HepG2 (cell line): ENCODE measurements at regions of chr1 and their contacts with region 1.

Region 1: GRCh38 chr1:85307987-85308832 is 31.8 kb upstream of the BCL10 start:
- DNase-seq: peak; percentile 70
- ATAC-seq: peak; percentile 97
- H3K4me3 ChIP-seq: peak overlapping the region in 2 of 3 experiments; percentile 29; a peak in 2 of 6 replicates
- H3K27ac ChIP-seq: no peak overlapping the region
- H3K4me1 ChIP-seq: peaks cover 15% of the 10 kb centered on the region
- H3K27me3 ChIP-seq: 0 out of 5 replicates have a peak, but pooled peaks cover 0 to 4% of the 10 kb centered on the region in 2 experiments
- CTCF ChIP-seq: peak; percentile 98
- EP300 ChIP-seq: no peak
- POLR2A ChIP-seq: no peak
- RAD21 ChIP-seq: peak; percentile 98

Region 2: GRCh38 chr1:85276215-85276977 is 31.8 kb before region 1 on chr1 and contains the start of gene BCL10:
- CTCF ChIA-PET with region 1: no interaction called
- POLR2A ChIA-PET with region 1: no interaction called
- in situ Hi-C with region 1: no loop called
- intact Hi-C with region 1: no loop called
- DNase-seq: peak; percentile 94
- ATAC-seq: peak; percentile 99
- H3K4me3 ChIP-seq: peak within 1 kb of the TSS; percentile 87 to 100 (median 89)
- H3K27ac ChIP-seq: peak within 1 kb of the TSS; percentile 83
- H3K4me1 ChIP-seq: peaks cover 61% of the 10 kb centered on the region
- H3K27me3 ChIP-seq: no peaks in the 10 kb centered on the region; a peak in 1 of 5 replicates
- CTCF ChIP-seq: no peak
- EP300 ChIP-seq: no peak
- POLR2A ChIP-seq: peak; percentile 78 to 87
- RAD21 ChIP-seq: no peak
- total RNA-seq, gene BCL10: 14.1 and 20.0 TPM in 2 replicates

Region 3: GRCh38 chr1:85344256-85344694 is 36.1 kb after region 1 on chr1:
- CTCF ChIA-PET with region 1: interaction called, 5 read pairs
- POLR2A ChIA-PET with region 1: no interaction called
- in situ Hi-C with region 1: no loop called
- intact Hi-C with region 1: loop called (anchors 1 kb)
- DNase-seq: peak; percentile 44
- ATAC-seq: peak; percentile 99
- H3K4me3 ChIP-seq: no peak overlapping the region
- H3K27ac ChIP-seq: no peak overlapping the region
- H3K4me1 ChIP-seq: peaks cover 32% of the 10 kb centered on the region
- H3K27me3 ChIP-seq: no peaks in the 10 kb centered on the region
- CTCF ChIP-seq: peak; percentile 80
- EP300 ChIP-seq: no peak
- POLR2A ChIP-seq: no peak
- RAD21 ChIP-seq: peak; percentile 53

Region 4: DNA sequence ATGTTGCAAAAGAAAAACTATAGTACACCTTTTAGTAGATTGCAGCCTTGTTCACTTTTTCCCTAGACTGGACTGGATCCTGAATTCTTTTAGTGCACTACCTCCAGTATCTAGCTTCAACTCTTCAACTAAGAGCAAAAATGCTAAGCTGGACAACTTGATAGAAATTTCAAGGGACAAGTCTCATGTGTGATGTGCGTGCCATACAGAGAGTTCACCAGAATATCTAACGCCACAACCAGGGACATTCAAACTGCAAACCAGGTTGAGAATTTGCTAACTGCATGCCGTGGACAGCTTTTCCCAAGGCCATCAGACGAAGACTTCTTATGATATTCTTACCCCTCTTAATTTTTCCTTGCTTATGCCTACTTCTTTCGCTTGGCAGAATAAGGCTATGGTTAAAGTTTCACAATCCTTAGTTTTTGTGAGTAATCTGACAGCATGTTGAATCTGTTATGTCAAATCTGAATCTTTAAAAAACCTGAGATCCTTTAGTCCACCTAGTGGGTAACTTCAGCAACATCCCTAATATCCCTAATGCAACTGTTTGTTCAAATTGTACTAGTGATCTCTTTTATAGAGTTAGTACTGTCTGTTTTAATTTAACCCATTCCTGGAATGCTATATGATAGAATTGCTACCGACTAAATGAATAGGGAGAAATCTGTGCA is 90.3 kb after region 1 on chr1:
- CTCF ChIA-PET with region 1: interaction called, 14 read pairs
- POLR2A ChIA-PET with region 1: no interaction called
- in situ Hi-C with region 1: loop called (anchors 5 kb)
- intact Hi-C with region 1: loop called (anchors 1 kb)
- DNase-seq: no peak
- ATAC-seq: no peak
- H3K4me3 ChIP-seq: no peak overlapping the region
- H3K27ac ChIP-seq: no peak overlapping the region
- H3K4me1 ChIP-seq: peaks cover 7% of the 10 kb centered on the region; the same call in 1 of the 2 replicates
- H3K27me3 ChIP-seq: no peaks in the 10 kb centered on the region
- CTCF ChIP-seq: no peak
- EP300 ChIP-seq: no peak
- POLR2A ChIP-seq: no peak
- RAD21 ChIP-seq: no peak

Region 5: GRCh38 chr1:85502625-85503083 is 194.4 kb after region 1 on chr1:
- CTCF ChIA-PET with region 1: interaction called, 64 read pairs
- POLR2A ChIA-PET with region 1: interaction called, 6 read pairs
- in situ Hi-C with region 1: loop called (anchors 5 kb)
- intact Hi-C with region 1: loop called (anchors 1 kb)
- DNase-seq: peak; percentile 70
- ATAC-seq: peak; percentile 98
- H3K4me3 ChIP-seq: peak overlapping the region; percentile 14 to 62 (median 30); a peak in 5 of 6 replicates
- H3K27ac ChIP-seq: no peak overlapping the region
- H3K4me1 ChIP-seq: peaks cover 18% of the 10 kb centered on the region
- H3K27me3 ChIP-seq: no peaks in the 10 kb centered on the region
- CTCF ChIP-seq: peak; percentile 73
- EP300 ChIP-seq: no peak
- POLR2A ChIP-seq: no peak
- RAD21 ChIP-seq: peak; percentile 36; the same call in 1 of the 2 replicates

Region 6: DNA sequence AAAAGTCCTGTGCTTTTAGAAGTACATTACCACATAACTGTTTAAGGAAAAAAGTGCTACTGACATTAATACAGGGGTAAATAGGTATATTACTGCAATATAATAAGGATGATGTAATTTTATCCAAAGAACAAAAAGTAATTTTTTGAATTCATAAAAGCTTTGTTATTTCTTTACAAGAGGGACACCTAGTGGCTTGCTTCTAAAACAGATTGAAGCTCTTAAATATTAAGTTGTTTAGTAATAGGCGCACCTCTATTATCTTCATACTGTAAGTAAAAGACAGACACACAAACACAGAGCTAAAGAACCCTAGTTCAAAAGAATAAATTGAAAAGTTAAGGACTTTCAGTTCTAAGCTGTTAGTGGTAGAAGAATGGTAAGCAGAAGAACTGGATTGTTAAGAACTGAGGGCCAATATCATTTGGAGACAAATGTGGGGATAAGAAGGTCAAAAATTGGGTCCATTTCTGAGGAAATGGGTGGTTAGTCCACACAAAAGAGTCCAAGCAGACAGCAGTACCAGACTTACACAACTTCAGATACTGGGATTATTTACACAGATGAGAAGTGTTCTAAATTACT is 384.6 kb after region 1 on chr1:
- CTCF ChIA-PET with region 1: interaction called, 9 read pairs
- POLR2A ChIA-PET with region 1: no interaction called
- in situ Hi-C with region 1: loop called (anchors 10 kb)
- intact Hi-C with region 1: loop called (anchors 1 kb)
- DNase-seq: peak; percentile 37
- ATAC-seq: no peak
- H3K4me3 ChIP-seq: no peak overlapping the region
- H3K27ac ChIP-seq: peak overlapping the region; percentile 5
- H3K4me1 ChIP-seq: no peaks in the 10 kb centered on the region
- H3K27me3 ChIP-seq: no peaks in the 10 kb centered on the region
- CTCF ChIP-seq: peak; percentile 33; the same call in 1 of the 2 replicates
- EP300 ChIP-seq: no peak
- POLR2A ChIP-seq: no peak
- RAD21 ChIP-seq: 0 out of 2 replicates have a peak, but pooled peaks have one; percentile 15

Region 7: GRCh38 chr1:85884372-85885035 is 576.3 kb after region 1 on chr1:
- CTCF ChIA-PET with region 1: no interaction called
- POLR2A ChIA-PET with region 1: no interaction called
- in situ Hi-C with region 1: loop called (anchors 10 kb)
- intact Hi-C with region 1: loop called (anchors 10 kb)
- DNase-seq: peak; percentile 14
- ATAC-seq: peak; percentile 74
- H3K4me3 ChIP-seq: no peak overlapping the region
- H3K27ac ChIP-seq: no peak overlapping the region
- H3K4me1 ChIP-seq: no peaks in the 10 kb centered on the region
- H3K27me3 ChIP-seq: no peaks in the 10 kb centered on the region; a peak in 1 of 5 replicates
- CTCF ChIP-seq: peak; percentile 23; the same call in 1 of the 2 replicates
- EP300 ChIP-seq: no peak
- POLR2A ChIP-seq: no peak
- RAD21 ChIP-seq: no peak

Region 8: GRCh38 chr1:86018283-86018923 is 710.2 kb after region 1 on chr1:
- CTCF ChIA-PET with region 1: interaction called, 5 read pairs
- POLR2A ChIA-PET with region 1: no interaction called
- in situ Hi-C with region 1: no loop called
- intact Hi-C with region 1: loop called (anchors 5 kb)
- DNase-seq: peak; percentile 10
- ATAC-seq: peak; percentile 67; the same call in 2 of the 3 replicates
- H3K4me3 ChIP-seq: no peak overlapping the region
- H3K27ac ChIP-seq: no peak overlapping the region
- H3K4me1 ChIP-seq: no peaks in the 10 kb centered on the region
- H3K27me3 ChIP-seq: no peaks in the 10 kb centered on the region
- CTCF ChIP-seq: peak; percentile 51
- EP300 ChIP-seq: no peak
- POLR2A ChIP-seq: no peak
- RAD21 ChIP-seq: no peak